ENCODE measurements at regions of chr2 and their contacts with region 1.

Region 1: DNA sequence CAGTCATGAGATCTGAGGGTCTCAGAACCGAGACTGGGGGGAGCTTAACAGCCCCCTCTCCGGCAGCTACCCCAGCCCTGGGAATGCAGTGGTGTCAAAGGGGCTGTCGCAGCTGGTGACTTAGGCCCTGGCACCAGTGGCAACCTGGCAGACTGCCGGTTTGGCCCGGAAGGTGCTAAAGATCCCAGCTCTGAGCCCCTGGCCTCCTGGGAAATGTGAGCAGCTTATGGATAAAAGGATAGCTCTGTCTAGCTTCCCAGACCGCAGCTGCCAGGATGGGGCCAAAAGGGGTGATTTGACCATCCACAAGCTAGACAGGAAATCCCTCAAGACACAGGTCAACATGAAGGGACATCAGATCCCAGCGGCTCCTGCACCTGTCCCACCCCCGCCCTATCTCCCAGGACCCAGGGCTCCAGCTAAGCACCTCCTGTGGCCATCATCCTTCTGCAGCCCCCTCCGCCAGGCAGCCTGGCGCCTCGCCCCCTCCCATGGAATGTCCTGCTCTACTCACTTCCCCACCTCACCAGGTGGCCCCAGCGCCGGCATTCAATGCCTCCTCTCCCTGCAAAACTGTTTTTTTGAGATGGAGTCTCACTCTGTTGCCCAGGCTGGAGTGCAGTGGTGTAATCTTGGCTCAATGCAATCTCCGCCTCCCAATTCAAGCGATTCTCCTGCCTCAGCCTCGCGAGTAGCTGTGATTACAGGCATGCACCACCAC is 33.2 kb upstream of the EFHD1 start:
- H3K4me3 Mint-ChIP-seq: no peak overlapping the region
- H3K27ac Mint-ChIP-seq: no peak overlapping the region
- H3K4me1 Mint-ChIP-seq: peaks cover 16% of the 10 kb centered on the region
- H3K27me3 Mint-ChIP-seq: peaks cover 20% of the 10 kb centered on the region

Region 2: DNA sequence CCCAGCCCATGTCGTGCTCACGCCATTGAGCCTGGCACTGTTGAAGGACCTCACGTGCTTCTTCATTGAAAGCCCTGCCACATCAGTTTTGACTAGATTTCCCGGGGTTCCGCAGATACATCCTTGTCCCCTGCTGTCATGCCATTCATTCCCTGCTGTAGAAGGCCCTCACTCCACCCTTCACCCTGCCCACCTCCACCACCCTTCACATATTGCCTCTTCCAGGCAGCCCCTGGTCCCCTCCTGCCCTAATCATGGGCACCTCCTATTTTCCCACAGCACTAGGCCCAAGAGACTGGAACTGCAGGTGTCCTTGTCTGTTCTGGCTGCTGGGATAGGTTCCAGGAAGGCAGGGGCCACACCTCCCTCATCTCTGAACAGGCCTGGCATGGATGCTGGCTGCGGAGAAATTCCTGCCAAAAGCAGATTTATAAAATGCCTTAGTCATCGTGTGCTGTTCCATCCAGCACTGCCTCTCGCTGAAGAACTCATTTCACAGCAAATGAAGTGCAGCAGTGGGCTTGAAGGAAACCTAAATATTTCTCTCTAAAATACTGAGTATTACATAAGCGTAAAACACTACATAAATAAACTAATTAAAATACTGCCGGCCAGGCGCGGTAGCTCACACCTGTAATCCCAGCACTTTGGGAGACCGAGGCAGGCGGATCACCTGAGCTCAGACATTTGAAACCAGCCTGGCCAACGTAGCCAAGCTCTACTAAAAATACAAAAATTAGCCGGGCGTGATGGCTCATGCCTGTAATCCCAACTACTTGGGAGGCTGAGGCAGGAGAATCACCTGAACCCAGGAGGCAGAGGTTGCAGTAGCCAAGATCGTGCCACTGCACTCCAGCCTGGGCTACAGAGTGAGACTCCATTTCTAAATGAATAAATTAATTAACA is 11.3 kb before region 1 on chr2:
- intact Hi-C with region 1: no loop called
- H3K4me3 Mint-ChIP-seq: no peak overlapping the region
- H3K27ac Mint-ChIP-seq: no peak overlapping the region
- H3K4me1 Mint-ChIP-seq: peaks cover 38% of the 10 kb centered on the region
- H3K27me3 Mint-ChIP-seq: peaks cover 8% of the 10 kb centered on the region

Region 3: DNA sequence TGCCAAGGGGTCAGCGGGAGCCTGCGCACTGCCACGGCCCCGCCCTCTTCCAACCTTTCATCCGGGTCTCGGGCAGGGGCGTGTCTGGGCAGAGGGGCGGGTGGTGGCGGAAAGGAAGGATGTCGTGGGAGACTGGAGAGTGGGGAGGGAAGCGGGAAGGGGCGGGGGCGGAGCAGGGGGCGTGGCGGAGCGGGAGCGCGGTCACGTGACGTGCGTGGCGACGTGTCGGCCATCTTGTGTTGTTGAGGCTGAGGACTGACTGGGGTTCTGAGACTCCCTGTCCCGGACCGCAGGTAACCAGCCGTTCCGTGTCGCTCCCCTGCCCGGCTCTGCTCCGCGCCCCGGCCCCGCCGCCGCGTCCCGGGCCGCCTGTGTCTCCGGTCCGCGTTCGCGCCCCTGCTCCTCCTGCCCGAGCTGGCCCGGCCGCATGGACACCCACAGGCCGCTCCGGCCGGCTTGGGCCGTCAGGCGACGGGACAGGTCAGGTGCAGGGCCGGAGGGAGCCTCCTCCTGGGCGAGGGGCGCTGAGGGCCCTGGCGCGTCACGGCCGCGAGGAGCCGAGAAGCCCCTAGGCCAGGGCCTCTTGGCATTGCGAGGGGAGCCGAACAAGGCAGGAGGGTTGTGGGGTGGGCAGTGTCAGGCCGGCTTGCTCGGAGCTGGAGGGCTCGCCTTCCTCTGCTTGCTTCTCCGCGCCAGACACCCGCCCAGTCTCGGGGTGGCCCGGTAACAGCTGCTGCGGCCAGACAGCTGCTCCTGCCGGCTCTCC is 97.1 kb after region 1 on chr2 and contains the start of gene GIGYF2:
- intact Hi-C with region 1: no loop called
- H3K4me3 Mint-ChIP-seq: peak within 1 kb of the TSS; percentile 93
- H3K27ac Mint-ChIP-seq: peak within 1 kb of the TSS; percentile 92
- H3K4me1 Mint-ChIP-seq: peaks cover 35% of the 10 kb centered on the region
- H3K27me3 Mint-ChIP-seq: peaks cover 5% of the 10 kb centered on the region

Region 4: DNA sequence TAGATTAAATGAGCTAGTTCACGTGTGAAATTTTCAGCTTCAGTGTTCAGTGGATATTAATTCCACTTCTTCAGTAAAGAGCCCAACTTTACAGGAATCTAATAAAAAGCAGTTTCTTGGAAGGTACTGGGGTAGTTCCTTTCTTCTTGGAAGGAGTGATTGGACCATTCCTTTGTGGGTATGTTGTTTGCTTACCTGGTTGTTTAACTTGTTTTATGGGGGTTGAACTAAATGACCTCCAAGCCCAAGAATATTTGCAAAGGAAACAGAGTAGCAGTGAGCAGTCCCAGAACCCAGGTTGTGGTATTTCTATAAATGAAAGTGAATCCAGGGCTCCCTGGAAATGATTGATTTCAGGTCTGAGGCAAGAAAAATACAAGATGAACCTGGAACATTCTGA is 144.8 kb after region 1 on chr2:
- intact Hi-C with region 1: loop called (anchors 10 kb)
- H3K4me3 Mint-ChIP-seq: no peak overlapping the region
- H3K27ac Mint-ChIP-seq: no peak overlapping the region
- H3K4me1 Mint-ChIP-seq: peaks cover 18% of the 10 kb centered on the region
- H3K27me3 Mint-ChIP-seq: no peaks in the 10 kb centered on the region